Left ventricle myocardium superior (tissue), 1 donor: ENCODE measurements at regions of chr12 and their contacts with region 1.

Region 1: GRCh38 chr12:15590180-15590826 is 198.9 kb downstream of the EPS8 start:
- DNase-seq: peak; percentile 40
- ATAC-seq: peak; percentile 89

Region 2: GRCh38 chr12:14454098-14454907 is 1136.0 kb before region 1 on chr12:
- intact Hi-C with region 1: no loop called
- DNase-seq: no peak
- ATAC-seq: peak; percentile 12

Region 3: GRCh38 chr12:15856097-15856982 is 266.0 kb after region 1 on chr12:
- intact Hi-C with region 1: loop called (anchors 2 kb)
- DNase-seq: no peak
- ATAC-seq: peak; percentile 60